ENCODE measurements at regions of chr19 and their contacts with region 1.

Region 1: GRCh38 chr19:46513461-46514236 is 18.0 kb upstream of the PNMA8B start:
- DNase-seq: peak; percentile 86
- ATAC-seq: peak; percentile 60
- H3K4me3 Mint-ChIP-seq: no peak overlapping the region
- H3K27ac Mint-ChIP-seq: no peak overlapping the region
- H3K4me1 Mint-ChIP-seq: peaks cover 10% of the 10 kb centered on the region
- H3K27me3 Mint-ChIP-seq: peaks cover 23% of the 10 kb centered on the region

Region 2: DNA sequence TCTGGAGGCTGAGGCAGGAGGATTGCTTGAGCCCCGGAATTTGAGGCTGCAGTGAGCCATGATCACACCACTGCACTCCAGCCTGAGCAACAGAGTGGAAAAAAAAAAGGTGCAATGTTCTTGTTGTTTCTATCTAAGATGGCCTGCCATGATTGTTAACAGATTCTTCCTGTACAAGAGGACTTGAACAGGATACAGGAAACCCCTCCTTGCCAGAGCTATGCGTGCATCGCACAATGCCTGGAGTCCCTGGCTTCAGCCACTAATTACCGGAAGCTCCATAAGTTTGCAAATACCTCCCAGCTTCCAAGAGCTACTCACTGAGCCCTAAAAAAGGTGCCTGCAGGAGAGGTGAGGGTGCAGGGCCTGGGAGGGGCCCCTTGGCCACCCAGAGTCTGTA is 229.9 kb before region 1 on chr19:
- CTCF ChIA-PET with region 1: interaction called, 7 read pairs
- POLR2A ChIA-PET with region 1: interaction called, 4 read pairs
- intact Hi-C with region 1: loop called in 1 of 2 experiments (anchors 1 kb)
- DNase-seq: no peak
- ATAC-seq: no peak
- H3K4me3 Mint-ChIP-seq: no peak overlapping the region
- H3K27ac Mint-ChIP-seq: no peak overlapping the region
- H3K4me1 Mint-ChIP-seq: no peaks in the 10 kb centered on the region
- H3K27me3 Mint-ChIP-seq: peaks cover 6% of the 10 kb centered on the region

Region 3: GRCh38 chr19:46392243-46392801 is 121.3 kb before region 1 on chr19:
- CTCF ChIA-PET with region 1: interaction called, 11 read pairs
- POLR2A ChIA-PET with region 1: no interaction called
- intact Hi-C with region 1: loop called in 1 of 2 experiments (anchors 1 kb)
- DNase-seq: no peak
- ATAC-seq: no peak
- H3K4me3 Mint-ChIP-seq: no peak overlapping the region
- H3K27ac Mint-ChIP-seq: no peak overlapping the region
- H3K4me1 Mint-ChIP-seq: peaks cover 4% of the 10 kb centered on the region
- H3K27me3 Mint-ChIP-seq: no peaks in the 10 kb centered on the region

Region 4: DNA sequence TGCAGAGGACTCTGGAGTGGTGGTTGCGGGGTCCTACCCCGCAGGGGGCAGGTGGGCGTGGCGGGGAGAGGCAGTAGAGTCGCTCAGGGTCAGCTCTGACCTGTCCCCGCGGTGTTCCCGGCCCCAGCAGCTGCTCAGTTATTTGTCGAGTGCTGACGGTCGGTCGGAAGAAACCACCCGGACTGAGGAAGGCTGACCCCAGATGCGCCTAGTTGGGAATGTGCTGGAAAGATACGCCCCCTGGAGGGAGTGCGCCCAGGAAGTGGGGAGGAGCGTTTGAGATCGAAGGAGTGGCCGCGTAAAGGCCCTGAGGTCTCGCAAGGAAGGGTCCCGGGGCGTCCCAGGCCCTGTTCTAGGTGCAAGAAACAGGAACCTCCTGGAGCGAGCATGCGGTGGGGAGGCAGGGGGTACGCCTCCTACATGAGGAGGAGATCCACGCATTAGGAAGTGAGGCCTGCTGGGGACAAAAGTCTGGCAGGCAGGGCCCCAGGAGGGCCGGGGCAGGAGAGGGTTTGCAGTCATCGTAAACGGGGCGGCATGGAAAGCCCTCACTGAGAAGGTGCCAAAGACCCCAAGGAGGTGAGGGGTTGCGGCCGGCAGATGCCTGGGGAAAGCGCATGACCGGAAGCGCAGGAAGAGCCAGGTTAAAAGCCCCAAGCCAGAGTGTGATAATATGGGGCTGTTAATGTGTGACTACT is 109.4 kb before region 1 on chr19:
- CTCF ChIA-PET with region 1: interaction called, 19 read pairs
- POLR2A ChIA-PET with region 1: no interaction called
- intact Hi-C with region 1: loop called in 1 of 2 experiments (anchors 1 kb)
- DNase-seq: no peak
- ATAC-seq: no peak
- H3K4me3 Mint-ChIP-seq: no peak overlapping the region
- H3K27ac Mint-ChIP-seq: no peak overlapping the region
- H3K4me1 Mint-ChIP-seq: peaks cover 17% of the 10 kb centered on the region
- H3K27me3 Mint-ChIP-seq: peaks cover 60% of the 10 kb centered on the region

Region 5: DNA sequence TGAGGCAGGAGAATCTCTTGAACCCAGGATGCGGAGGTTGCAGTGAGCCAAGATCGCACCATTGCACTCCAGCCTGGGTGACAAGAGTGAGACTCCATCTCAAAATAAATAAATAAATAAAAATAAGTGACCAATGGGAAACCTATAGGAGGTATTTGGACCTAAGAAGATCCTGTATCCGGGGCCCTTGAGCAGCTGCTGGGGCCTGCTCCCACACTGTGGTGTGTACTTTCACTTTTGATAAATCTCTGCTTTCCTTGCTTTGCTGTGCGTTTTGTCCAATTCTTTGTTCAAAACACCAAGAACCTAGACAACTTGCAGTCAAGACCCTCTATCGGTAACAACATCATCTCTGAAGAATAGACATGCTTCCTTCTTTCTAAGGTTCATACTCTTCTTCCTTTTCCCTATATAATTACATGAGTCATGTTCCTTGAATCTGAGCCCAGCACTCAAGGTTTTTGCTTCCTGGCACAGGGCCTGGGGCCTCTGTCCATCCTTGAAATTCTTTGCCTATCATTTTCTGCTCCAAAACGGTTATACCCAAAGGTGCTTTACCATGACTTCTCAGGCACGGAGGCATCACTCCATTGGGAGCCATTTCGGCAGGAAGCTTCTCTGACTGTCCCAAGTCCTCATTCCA is 70.7 kb before region 1 on chr19:
- CTCF ChIA-PET with region 1: no interaction called
- POLR2A ChIA-PET with region 1: no interaction called
- intact Hi-C with region 1: no loop called
- DNase-seq: no peak
- ATAC-seq: no peak
- H3K4me3 Mint-ChIP-seq: no peak overlapping the region
- H3K27ac Mint-ChIP-seq: no peak overlapping the region
- H3K4me1 Mint-ChIP-seq: no peaks in the 10 kb centered on the region
- H3K27me3 Mint-ChIP-seq: peaks cover 8% of the 10 kb centered on the region

Region 6: DNA sequence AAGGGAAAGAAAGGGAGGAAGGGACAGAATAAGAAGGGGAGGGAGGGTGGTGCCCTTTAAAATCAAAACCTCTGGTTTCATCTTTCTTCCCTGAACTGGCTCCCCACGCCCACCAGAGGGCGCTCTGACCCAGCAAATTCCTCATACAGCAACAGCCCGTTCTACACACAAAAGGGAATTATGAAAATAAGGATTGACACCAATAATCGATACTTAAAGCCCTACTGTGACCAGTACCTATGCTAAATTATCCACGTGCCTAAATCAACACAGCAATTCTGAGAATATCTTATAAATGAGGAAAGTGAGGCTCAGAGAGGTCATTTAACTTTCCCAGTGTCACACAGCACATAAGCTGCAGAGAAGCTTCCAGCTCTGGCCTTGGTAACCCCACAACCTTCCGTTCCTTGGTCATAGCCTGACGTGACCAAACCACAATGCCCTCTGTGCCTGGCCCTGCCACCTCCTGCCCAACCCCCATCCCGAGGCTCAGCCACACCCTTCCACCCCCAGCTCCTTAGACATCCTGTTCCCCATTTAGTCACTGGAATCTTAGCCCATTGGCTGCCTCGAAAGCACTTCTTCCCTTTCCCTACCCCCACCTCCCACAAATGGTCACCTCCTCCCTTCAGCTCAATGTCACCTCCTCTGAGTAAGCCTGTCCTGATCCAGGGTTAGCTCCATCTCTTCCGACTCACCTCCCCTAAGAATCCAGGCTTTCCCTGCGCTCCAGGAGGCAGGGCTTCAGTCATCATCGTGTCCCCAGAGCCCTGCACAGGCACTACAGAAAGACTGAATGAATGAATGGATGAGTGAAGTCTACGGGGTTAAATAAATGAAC is 16.2 kb after region 1 on chr19:
- CTCF ChIA-PET with region 1: interaction called, 30 read pairs
- POLR2A ChIA-PET with region 1: no interaction called
- intact Hi-C with region 1: no loop called
- DNase-seq: peak; percentile 86
- ATAC-seq: peak; percentile 75
- H3K4me3 Mint-ChIP-seq: no peak overlapping the region
- H3K27ac Mint-ChIP-seq: peak overlapping the region; percentile 74
- H3K4me1 Mint-ChIP-seq: peaks cover 24% of the 10 kb centered on the region
- H3K27me3 Mint-ChIP-seq: no peaks in the 10 kb centered on the region

Region 7: DNA sequence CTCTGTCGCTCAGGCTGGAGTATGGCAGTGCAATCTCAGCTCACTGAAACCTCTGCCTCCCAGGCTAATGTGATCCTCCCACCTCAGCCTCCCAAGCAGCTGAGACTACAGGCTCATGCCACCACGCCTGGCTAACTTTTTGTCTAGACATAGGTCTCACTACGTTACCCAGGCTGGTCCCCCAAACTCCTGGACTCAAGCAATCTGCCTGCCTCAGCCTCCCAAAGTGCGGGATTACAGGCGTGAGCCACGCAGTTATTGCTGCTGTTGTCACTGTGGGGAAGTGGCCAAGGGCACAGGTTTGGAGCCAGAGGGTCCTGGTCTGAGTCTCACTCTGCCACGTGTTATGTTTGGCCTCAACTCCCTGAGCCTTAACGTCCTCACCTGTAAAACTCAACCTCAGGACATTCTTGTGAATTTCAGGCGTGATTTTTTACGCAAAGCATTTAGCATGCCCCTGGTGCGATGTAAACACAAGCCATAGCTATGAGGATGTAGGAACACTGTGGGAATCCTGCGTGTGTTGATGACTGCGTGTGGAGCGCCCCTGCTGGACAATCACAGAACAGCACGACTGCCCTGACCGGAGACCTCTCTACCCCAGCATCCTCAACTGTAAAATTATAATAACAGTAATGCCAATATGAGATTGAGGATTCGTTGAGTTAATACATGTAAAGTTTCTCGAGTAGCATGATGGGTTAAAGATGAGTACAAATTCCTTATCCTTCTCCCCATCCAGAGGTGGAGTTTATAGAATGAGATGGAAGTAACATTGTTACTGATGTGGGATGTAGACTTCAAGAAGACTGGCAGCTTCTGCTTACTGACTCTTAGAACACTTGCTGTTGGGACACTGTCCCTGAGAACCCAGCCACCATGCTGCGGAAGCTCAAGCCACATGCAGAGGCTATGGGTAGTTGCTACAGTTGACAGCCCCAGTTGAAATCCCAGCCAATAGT is 23.8 kb after region 1 on chr19:
- CTCF ChIA-PET with region 1: interaction called, 37 read pairs
- POLR2A ChIA-PET with region 1: interaction called, 4 read pairs
- intact Hi-C with region 1: loop called (anchors 1 kb)
- DNase-seq: peak; percentile 80
- ATAC-seq: peak; percentile 72
- H3K4me3 Mint-ChIP-seq: no peak overlapping the region
- H3K27ac Mint-ChIP-seq: no peak overlapping the region
- H3K4me1 Mint-ChIP-seq: peaks cover 9% of the 10 kb centered on the region
- H3K27me3 Mint-ChIP-seq: no peaks in the 10 kb centered on the region

Region 8: DNA sequence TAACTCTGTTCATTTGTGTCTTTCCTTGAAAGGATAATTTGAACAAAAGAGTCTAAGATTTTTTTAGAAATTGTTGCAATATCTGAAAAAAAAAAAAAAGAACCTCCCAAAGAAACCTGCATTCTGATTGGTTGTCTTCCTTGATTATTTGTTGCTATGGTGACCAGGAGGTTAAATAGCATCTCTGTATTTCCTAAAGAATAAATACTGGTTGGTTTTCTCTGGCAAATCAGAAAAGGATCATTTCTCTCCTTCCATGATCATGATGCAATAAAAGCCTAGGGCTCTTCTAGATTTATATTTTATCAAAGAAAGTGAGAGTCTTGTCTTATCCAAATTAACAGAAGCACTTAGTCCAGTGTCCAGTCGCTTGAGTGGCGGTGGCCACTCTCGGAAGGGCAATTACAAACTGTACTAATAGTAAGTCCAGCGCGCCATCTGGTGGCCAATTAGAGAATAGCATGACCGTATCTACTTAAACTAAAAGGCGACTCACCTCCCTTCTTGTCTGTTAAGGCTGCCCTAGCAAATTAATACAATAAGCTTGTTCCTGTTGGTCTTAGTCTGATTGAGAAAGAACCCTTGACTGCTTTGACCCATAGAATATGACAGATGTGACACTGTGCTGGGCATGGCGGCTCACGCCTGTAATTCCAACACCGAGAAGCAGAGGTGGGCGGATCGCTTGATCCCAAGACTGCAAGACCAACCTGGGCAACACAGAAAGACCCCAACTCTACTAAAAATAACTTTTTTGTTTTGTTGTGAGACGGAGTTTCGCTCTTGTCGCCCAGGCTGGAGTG is 29.0 kb after region 1 on chr19:
- CTCF ChIA-PET with region 1: interaction called, 37 read pairs
- POLR2A ChIA-PET with region 1: interaction called, 8 read pairs
- intact Hi-C with region 1: loop called (anchors 1 kb)
- DNase-seq: peak; percentile 90
- ATAC-seq: peak; percentile 64
- H3K4me3 Mint-ChIP-seq: no peak overlapping the region
- H3K27ac Mint-ChIP-seq: no peak overlapping the region
- H3K4me1 Mint-ChIP-seq: peaks cover 9% of the 10 kb centered on the region
- H3K27me3 Mint-ChIP-seq: no peaks in the 10 kb centered on the region

Measured in activated CD4-positive, alpha-beta T cell treated with anti-CD3 and anti-CD28 coated beads for 36 hours (primary cell).